ENCODE measurements at regions of chr2 and their contacts with region 1.

Region 1: GRCh38 chr2:195304310-195304709 is 352.7 kb upstream of the SLC39A10 start:
- DNase-seq: peak; percentile 56
- H3K4me3 ChIP-seq: no peak overlapping the region
- H3K27ac ChIP-seq: no peak overlapping the region
- H3K4me1 ChIP-seq: no peaks in the 10 kb centered on the region
- H3K27me3 ChIP-seq: no peaks in the 10 kb centered on the region
- CTCF ChIP-seq: peak; percentile 62

Region 2: DNA sequence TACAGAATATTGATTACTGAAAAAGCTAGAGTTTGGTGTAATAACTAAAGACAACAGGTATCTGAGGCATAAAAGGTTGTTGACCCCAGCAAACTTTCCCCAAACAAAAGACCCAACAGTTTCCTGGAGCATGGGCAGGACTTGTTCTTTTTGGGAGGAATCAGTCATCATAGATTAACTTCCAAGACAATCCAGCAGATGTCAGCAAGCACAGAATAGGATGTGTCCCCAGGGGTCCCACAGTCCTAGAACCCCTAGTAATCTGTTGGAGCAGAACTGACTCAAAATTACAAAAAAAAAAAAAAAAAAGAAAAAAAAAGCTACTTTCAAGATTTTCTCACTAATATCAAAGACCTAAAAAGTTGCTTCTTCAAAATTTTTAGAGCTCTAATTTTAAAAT is 212.0 kb before region 1 on chr2:
- CTCF ChIA-PET with region 1: no interaction called
- POLR2A ChIA-PET with region 1: no interaction called
- intact Hi-C with region 1: loop called (anchors 2 kb)
- DNase-seq: peak; percentile 65
- H3K4me3 ChIP-seq: no peak overlapping the region
- H3K27ac ChIP-seq: no peak overlapping the region
- H3K4me1 ChIP-seq: peaks cover 11% of the 10 kb centered on the region
- H3K27me3 ChIP-seq: no peaks in the 10 kb centered on the region
- CTCF ChIP-seq: peak; percentile 47